Transverse colon (tissue), 4 donors: ENCODE measurements at regions of chr22 and their contacts with region 1.

Region 1: GRCh38 chr22:42662114-42663021 is 13.2 kb upstream of the CYB5R3 start:
- DNase-seq: peak; percentile 87
- H3K4me3 ChIP-seq: peak overlapping the region; percentile 22 to 58 (median 38)
- H3K27ac ChIP-seq: peak overlapping the region; percentile 5 to 45 (median 28)
- H3K4me1 ChIP-seq: peaks cover 0 to 12% (median 11%) of the 10 kb centered on the region in 4 donors
- H3K27me3 ChIP-seq: peaks cover 8% of the 10 kb centered on the region
- CTCF ChIP-seq: peak; percentile 74 to 89 (median 83)
- EP300 ChIP-seq: no peak
- POLR2A ChIP-seq: no peak

Region 2: DNA sequence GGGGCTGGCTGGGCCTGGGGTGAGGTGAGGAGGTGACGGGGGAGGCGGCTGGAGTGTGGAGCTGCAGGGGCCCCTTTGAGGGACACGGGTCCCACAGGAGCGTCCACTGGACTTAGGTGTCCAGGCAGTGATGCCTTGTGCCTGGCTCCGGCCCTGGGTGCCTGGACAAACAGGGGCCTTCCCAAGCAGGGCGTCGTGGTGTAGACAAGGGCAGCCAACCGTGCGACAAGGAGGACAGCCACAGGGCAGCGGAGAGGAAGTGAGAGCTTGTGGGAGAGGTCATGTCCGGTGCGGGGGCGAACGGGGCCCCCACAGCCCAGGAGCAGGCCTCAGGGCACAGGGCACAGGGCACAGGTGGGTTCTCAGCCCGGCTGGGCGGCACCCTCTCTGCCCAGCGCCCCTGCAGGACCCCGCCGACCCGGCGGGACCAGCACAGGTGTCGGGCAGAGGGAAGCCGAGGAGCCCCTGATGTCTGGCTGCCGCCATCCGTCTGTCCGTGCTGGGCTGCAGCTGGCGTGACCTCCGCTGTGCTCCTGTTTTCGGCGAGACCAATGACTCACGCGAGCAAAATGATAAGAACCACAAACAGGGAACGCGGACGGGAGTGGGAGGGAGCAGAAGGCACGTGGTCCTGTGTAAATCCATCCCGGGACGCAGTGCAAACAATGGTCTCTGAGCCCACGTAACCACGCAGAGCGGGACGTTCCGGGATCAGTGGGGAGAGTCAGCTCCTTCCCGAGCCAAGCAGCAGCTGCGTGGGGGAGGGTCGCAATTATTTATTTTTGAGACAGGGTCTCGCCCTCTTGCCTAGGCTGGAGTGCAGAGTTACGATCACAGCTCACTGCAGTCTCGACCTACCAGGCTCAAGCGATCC is 107.4 kb after region 1 on chr22:
- in situ Hi-C with region 1: loop called in 1 of 4 experiments (anchors 10 kb)
- intact Hi-C with region 1: no loop called
- DNase-seq: peak; percentile 54
- H3K4me3 ChIP-seq: peak overlapping the region in 3 of 4 donors; percentile 0 to 16 (median 13)
- H3K27ac ChIP-seq: no peak overlapping the region
- H3K4me1 ChIP-seq: peaks cover 3 to 16% (median 8%) of the 10 kb centered on the region in 4 donors
- H3K27me3 ChIP-seq: no peaks in the 10 kb centered on the region
- CTCF ChIP-seq: no peak
- EP300 ChIP-seq: no peak
- POLR2A ChIP-seq: no peak